GM13977 (cell line): ENCODE measurements at regions of chr6 and their contacts with region 1.

Region 1: DNA sequence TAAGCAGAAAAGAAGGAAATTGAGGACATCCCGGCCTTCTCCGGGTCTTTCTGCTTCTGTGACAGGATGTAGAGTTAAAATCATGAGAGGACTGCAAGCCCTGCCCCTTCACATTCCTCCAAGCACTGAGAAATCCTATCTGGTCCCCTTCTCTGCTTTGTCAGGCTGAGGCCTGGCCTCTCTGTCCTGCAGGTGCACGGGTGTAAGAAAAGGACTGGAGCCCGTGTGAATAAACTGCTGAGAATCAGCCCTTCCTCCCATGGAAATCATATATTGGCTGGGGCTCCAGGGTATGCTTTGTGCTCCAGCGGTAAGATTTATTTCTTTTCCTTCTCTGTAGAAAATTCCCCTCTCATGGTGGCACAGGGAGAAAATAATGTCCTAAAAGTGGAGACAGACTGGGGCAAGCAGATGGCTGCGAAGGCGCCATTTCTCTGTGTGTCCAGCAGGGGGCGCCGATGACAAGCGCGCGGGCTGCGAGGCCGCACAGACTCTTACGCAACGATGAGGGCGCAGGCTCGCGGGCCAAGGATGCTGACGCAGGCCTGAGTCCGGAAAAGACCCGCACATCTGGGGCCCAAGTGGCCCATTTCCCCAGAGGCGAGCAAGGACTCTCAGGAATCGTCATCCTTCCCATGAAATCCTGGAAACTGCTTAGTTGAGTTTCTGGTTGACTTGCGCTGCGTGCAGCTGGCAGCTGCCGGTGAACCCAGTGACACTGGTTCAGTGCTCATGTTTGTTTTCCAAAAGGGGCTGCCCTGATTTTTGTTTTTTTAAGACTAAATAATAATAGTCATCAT is 258.6 kb downstream of the ADGB start:
- DNase-seq: peak; percentile 72
- CTCF ChIP-seq: peak; percentile 99

Region 2: DNA sequence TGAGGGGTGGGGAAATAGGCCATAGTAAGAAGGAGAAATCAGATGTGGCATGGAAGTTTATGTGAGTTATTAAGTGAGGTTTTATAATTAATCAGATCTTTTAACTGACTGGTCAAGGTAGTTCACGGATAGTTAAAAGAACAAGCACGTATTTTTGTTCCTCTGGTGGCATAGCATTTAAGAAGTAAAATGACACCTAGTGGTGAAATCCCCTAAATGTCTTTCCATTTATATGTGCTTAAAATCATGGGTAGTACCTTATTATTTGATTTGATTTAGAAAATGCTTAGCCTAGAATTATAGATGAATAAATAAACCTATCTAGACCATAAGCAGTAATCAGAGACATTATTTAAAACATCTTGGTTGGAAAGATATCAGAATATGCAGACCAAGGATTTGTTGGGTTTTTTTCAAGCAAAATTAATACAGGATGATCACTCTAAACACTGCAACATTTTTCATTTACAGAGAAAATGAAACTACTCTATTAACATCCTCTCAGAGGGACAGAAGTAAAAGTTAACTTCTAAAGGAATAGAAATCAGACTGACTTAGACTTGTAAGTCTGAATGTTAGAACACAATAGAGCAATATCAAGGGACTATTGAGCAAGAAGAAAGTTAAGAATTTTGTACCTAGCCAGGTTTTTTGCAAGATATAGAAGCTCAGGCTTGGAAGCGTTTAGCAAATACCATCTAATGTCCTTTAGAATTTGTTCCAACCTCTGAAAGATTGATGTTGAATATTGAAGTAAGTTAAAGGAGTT is 427.9 kb after region 1 on chr6:
- in situ Hi-C with region 1: loop called (anchors 25 kb)
- DNase-seq: peak; percentile 34
- CTCF ChIP-seq: peak; percentile 42